ENCODE measurements at regions of chr22 and their contacts with region 1.

Region 1: DNA sequence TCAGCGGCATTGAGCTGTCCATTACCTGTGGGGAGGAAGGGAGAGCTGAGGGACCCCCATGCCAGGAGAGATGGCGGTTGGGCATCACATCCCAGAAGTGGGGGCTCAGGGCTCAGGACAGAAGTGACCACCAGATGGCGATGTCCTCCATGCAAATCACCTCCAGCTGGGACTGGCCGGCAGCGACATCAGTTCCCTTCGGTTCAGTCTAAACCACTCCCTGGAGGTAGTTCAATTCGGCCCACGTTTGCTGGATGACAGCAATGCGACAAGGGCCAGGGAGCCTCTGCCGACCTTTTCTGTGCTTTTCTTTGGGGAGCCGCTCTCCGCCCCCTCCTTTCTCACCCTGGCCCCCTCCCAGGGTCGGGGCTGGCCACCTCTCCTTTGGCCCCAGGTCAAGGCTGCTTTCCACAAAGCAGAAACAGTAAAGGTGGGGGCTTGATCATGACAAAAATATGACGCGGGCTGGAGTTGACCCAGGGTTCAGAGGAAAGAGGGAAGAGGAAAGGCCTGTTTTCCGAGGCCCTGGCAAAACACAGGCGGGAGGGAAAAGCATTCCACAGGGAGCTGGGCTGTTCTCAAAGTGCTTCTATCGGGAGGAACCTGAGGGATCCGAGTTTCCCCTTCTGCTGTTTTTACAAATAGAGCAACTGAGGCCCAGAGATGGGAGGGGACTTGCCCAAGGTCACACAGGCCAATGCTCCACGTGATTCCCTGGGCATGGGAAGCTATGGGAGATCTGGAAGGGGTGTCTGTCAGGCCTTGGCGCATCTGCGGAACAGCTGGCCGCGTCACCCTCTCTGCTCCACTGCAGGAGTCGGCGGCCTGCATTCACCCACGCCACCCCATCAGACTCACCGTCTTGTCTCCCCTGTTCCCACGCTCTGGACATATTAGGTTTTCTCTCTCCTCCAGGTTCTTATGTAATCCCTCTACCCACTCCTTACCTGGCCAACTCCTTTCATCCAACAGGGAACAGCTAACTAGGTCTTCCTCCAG is 54.7 kb downstream of the FBXO7 start:
- DNase-seq: peak; percentile 89
- ATAC-seq: peak; percentile 66

Region 2: DNA sequence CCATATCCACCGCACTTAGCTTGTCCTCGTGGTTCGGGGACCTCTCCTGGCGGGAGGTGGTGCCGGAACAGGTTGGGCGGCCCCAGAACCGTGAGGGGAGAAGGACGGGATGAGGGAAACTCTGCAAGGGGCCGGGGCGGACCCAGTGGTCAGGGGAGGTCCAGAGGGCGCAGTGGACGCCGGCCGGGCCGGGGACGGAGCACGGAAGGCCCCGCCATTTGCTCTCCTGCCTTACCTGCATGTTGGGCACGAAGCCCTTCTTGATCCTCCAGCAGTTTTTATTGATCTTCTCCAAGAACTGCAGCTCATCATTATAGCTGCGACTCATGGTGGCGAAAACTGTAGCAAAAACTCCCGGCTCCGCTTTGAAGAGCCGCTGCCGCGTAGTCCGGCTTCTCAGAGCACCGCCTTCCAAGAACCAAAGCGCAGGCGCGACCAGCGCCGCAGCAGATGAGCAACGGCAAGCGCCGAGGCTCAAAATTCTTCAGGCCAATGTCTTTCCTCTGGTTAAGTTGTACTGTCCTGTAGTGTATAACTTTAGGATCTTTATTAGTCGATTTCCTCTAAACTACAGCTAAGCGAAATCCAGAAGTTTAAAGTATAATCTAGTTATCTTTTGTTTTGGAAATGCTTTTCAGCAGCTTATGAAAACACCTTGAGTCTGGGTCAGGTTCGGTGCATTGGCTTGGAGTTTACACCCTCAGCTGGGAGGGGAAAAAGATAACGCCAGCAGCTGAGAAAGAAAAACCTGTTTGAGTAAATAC is 117.3 kb before region 1 on chr22 and contains the start of gene RTCB:
- intact Hi-C with region 1: no loop called
- DNase-seq: peak; percentile 95
- ATAC-seq: peak; percentile 95
- total RNA-seq, gene RTCB: 43.0 TPM

Region 3: DNA sequence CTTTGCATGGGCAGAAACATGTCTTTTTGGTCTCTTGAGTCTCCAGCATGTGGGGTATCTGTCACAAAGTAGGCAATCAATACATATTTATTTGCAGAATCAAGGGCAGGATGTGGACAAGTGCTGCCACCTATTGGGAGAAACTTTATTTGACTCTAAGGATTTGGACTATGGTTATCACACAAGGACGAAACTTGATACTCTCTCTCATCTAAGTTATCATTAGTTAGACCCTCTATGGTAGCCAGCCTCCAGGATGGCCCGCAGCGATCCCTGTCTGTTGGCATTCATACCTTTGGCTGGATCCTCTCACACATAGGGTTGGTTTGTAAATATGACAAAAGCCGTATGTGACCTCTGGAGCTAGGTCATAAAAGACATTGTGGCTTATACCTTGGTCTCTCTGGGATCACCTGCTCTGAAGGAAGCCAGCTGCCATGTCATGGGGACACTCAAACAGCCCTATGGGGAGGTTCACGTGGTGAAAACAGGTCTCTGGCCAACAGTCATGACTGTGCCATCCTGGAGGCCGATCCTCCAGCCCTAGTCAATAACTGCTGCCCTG is 55.8 kb before region 1 on chr22:
- intact Hi-C with region 1: no loop called
- DNase-seq: no peak
- ATAC-seq: peak; percentile 3

Region 4: DNA sequence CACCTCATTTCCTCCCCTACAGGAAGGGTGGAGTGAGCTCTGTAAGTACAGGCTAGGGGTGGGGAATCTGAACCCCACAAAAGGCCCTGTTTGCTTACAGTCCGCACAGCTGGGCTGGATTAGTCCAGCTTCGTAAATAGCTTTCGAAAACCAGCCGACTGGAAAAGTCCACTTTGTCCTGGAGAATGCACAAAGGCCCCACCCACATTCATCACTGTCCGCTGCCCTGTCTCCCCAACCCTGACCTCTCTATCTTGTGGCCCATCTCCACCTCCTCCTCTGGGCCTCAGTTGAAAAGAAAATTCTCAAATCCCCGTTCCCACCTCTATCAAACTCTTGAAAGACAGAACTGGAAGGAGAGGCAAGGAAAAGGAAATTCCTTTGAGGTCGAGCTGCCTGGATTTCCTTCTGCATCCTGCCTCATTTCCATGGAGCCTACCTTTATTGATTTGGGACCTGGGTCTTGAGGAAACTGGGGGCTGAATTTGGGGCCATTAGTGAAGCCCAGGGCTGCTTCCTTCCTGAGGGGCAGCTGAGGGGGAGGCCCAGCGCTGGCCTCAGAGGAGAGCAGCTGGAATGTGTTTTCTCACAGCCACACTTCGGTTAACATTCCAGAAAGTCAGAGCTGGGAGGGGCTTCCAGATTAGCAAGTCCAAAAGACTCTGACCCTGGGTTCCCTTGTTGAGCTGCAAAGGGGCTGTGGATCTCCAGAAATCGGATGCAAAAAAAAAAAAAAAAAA is 92.9 kb after region 1 on chr22:
- intact Hi-C with region 1: loop called (anchors 5 kb)
- DNase-seq: peak; percentile 62
- ATAC-seq: peak; percentile 69

Region 5: GRCh38 chr22:32660292-32660691 is 131.0 kb after region 1 on chr22:
- intact Hi-C with region 1: loop called (anchors 10 kb)
- DNase-seq: peak; percentile 79
- ATAC-seq: peak; percentile 77

Region 6: DNA sequence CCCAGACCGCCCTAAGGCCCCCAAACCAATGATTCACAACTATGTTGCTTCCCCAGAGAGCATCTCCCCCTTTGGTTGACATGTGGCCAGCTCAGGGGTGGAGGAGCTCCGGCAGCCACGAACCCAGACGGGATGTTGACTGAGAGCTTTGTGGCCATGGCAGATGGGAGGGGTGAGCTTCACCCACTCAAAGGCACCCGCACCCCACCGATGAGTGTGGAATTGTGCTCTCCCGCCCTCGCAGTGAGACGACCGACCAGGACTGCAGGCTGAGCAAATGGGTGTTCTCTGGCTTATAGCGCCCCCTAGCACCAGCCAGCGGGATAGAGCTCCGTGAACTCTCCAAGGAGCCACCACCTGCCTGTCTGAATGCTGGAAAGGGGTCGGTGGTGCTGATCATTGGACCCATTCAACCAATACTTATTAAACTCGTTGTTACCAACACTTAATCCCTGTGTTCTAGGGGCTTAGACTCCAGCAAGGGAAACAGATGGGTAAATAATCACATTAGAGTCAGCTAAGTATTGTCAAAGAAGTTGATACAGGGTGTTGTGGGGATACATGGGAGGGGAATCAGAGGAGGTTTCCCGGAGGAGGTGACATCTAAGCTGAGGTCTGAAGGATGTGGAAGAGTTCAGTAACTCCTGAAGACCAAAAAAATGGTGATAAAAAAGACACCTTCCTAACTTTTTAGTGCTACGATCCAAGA is 267.7 kb after region 1 on chr22:
- intact Hi-C with region 1: loop called (anchors 5 kb)
- DNase-seq: peak; percentile 80
- ATAC-seq: peak; percentile 55

Region 7: DNA sequence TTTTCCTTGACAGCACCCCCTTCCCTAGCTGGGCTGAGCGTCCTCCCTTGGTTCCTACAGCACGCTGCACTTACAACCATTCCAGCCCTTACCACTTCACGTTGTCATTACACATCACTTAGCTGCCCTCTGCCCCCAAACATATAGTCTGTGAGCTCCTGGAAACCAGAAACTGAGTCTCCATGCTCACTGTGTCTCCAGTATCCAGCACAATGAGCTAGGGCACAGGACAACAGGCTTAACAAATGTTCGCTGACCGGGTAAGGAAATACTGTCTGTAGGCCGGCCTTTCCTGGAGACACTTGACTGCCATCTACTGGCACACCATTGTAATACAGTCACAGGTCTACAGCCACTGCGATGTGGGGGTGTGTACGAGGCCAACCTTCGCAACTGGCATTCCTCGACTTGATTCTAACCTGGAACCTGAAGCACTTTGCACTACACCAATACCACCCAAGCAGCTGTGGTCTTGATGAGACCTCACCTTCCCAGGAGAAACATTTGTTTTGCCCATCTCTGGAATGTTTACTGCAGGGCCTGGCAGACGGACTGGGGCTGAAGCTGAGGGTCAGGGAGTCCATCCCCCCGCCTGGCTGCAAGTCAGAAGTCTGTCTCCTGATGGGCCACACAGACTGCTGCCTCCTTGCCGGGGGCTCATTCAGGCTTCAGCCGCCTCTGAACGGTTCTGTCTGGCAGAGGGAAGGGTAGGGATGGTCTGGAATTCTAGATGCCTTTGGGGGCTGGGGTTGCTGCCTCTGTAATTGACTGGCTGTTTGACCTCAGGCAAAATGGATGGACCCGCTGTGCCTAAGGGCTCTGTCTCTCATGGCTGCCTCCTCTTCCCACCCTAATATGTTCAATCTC is 456.8 kb after region 1 on chr22:
- intact Hi-C with region 1: loop called (anchors 5 kb)
- DNase-seq: peak; percentile 48
- ATAC-seq: peak; percentile 99

Region 8: GRCh38 chr22:33000342-33001280 is 471.3 kb after region 1 on chr22:
- intact Hi-C with region 1: loop called (anchors 5 kb)
- DNase-seq: peak; percentile 80
- ATAC-seq: peak; percentile 68